AG04450 (cell line): ENCODE measurements at regions of chr2 and their contacts with region 1.

Region 1: GRCh38 chr2:159118115-159118858 is 149.8 kb downstream of the TANC1 start:
- DNase-seq: peak; percentile 77
- H3K4me3 ChIP-seq: no peak overlapping the region
- H3K27ac ChIP-seq: no peak overlapping the region
- H3K27me3 ChIP-seq: no peaks in the 10 kb centered on the region
- CTCF ChIP-seq: peak; percentile 92

Region 2: DNA sequence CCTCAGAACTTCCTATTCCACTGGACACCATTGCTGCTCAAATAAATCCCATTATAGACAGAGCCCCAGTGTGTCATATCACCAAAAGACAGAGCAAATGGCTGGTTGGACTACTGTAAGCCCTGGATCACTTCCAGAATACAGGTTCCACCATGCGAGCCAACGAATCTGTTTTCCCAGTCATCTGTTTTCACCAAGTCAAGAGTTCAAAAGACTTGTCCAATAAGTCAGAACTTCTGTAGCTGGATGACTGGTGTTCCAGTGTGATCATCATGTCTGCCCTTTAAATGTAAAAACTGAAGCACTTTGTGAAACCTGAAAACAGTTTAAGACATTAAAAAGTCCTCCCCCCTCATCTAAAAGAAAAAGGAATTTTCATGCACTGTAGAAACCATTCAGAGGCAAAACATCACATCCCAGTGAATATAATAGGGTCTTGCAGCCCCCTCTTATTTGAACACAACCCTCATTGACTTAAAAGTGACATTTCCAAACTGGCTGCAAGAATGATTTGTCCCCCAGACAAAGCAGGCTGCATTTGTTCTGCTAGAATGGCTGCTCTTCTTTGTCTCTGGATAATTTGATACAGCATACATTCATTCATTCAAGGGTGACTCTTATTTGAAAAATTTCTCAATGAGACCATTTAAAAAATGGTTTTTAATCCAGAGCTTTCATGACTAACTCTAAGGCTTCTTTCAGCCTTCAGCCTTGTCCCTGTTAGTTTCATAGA is 214.4 kb before region 1 on chr2:
- CTCF ChIA-PET with region 1: interaction called, 94 read pairs
- POLR2A ChIA-PET with region 1: no interaction called
- DNase-seq: no peak
- H3K4me3 ChIP-seq: no peak overlapping the region
- H3K27ac ChIP-seq: no peak overlapping the region
- H3K27me3 ChIP-seq: no peaks in the 10 kb centered on the region
- CTCF ChIP-seq: no peak

Region 3: GRCh38 chr2:158984604-158985135 is 133.6 kb before region 1 on chr2:
- CTCF ChIA-PET with region 1: interaction called, 11 read pairs
- POLR2A ChIA-PET with region 1: no interaction called
- DNase-seq: no peak
- H3K4me3 ChIP-seq: no peak overlapping the region
- H3K27ac ChIP-seq: no peak overlapping the region
- H3K27me3 ChIP-seq: no peaks in the 10 kb centered on the region
- CTCF ChIP-seq: no peak

Region 4: DNA sequence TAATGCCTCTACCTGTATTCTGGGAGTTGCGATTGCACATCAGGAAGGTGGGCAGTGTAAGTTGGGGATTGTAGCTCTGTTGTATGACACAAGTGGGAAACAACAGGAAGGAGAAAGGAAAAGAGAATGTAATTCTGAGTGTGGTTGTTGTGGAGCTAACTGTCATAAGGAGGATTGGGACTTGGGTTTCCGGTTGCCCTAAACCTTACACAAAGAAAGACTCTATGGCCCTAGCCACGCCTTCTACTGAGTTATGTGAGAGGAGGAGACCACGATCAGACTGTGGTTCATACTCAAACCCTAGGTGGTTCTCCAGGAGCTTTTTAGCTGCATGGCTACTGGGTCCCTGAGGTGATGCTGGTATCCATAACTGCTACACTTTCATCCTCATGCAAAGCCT is 63.3 kb before region 1 on chr2:
- CTCF ChIA-PET with region 1: interaction called, 15 read pairs
- POLR2A ChIA-PET with region 1: interaction called, 5 read pairs
- DNase-seq: no peak
- H3K4me3 ChIP-seq: no peak overlapping the region
- H3K27ac ChIP-seq: no peak overlapping the region
- H3K27me3 ChIP-seq: no peaks in the 10 kb centered on the region
- CTCF ChIP-seq: no peak

Region 5: DNA sequence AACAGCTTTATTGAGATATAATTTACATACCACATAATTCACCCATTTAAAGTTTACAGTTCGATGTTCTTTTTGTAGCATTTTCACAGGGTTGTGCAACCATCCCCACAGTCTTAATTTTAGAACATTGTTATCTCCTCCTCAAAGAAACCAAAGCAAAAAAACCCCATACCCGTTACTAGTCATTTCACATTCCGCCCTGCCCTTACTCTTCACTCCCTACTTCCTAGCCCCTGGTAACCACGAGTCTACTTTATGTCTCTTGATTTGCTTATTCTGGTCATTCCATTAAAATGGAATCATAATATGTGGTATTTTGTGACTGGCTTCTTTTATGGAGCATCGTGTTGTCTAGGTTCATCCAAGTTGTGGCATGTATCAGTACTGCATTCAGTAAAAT is 12.2 kb before region 1 on chr2:
- CTCF ChIA-PET with region 1: interaction called, 17 read pairs
- POLR2A ChIA-PET with region 1: no interaction called
- DNase-seq: no peak
- H3K4me3 ChIP-seq: no peak overlapping the region
- H3K27ac ChIP-seq: no peak overlapping the region
- H3K27me3 ChIP-seq: no peaks in the 10 kb centered on the region
- CTCF ChIP-seq: no peak

Region 6: DNA sequence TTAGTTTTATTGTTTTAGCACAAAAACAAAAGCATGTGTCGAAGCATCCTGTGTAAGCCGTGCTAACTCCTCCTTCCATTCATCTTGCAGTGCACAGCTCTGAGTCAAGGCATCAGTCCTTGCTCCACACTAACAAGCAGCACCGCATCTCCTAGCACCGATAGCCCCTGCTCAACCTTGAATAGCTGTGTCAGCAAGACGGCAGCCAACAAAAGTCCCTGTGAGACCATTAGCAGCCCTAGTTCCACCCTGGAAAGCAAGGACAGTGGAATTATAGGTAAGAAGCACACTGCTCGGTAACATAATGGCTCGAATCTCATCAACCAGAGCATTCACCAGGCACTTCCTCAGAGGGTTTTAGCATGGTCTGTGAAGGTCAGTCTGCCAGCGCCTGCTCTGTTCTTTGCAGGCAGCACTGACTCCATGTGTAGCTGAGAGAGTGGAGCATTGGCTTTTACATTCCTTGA is 32.0 kb after region 1 on chr2:
- CTCF ChIA-PET with region 1: interaction called, 37 read pairs
- POLR2A ChIA-PET with region 1: no interaction called
- DNase-seq: no peak
- H3K4me3 ChIP-seq: no peak overlapping the region
- H3K27ac ChIP-seq: no peak overlapping the region
- H3K27me3 ChIP-seq: no peaks in the 10 kb centered on the region
- CTCF ChIP-seq: no peak